Kidney (tissue), 22 donors: ENCODE measurements at regions of chr14 and their contacts with region 1.

Region 1: DNA sequence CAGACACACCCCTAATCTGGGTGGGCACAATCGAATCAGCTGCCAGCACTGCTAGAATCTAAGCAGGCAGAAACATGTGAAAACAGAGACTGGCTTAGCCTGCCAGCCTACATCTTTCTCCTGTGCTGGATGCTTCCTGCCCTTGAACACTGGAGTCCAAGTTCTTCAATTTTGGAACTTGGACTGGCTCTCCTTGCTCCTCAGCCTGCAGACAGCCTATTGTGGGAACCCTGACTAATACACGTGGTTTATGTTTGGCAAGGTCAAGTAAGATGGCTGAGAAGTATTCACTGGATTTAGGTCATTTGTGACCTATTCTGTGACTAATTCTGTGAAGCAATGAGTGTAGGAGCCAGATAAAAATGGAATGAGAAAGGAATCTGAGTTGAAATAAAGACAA is 11.0 kb downstream of the GPR135 start:
- DNase-seq: no peak
- H3K4me3 ChIP-seq: no peak overlapping the region
- H3K27ac ChIP-seq: no peak overlapping the region
- H3K4me1 ChIP-seq: no peaks in the 10 kb centered on the region
- H3K27me3 ChIP-seq: no peaks in the 10 kb centered on the region
- CTCF ChIP-seq: no peak

Region 2: GRCh38 chr14:58944343-58944972 is 509.7 kb before region 1 on chr14:
- intact Hi-C with region 1: no loop called
- DNase-seq: peak in 4 of 5 donors; percentile 57 to 78 (median 61)
- H3K4me3 ChIP-seq: no peak overlapping the region
- H3K27ac ChIP-seq: no peak overlapping the region
- H3K4me1 ChIP-seq: no peaks in the 10 kb centered on the region
- H3K27me3 ChIP-seq: no peaks in the 10 kb centered on the region
- CTCF ChIP-seq: no peak

Region 3: DNA sequence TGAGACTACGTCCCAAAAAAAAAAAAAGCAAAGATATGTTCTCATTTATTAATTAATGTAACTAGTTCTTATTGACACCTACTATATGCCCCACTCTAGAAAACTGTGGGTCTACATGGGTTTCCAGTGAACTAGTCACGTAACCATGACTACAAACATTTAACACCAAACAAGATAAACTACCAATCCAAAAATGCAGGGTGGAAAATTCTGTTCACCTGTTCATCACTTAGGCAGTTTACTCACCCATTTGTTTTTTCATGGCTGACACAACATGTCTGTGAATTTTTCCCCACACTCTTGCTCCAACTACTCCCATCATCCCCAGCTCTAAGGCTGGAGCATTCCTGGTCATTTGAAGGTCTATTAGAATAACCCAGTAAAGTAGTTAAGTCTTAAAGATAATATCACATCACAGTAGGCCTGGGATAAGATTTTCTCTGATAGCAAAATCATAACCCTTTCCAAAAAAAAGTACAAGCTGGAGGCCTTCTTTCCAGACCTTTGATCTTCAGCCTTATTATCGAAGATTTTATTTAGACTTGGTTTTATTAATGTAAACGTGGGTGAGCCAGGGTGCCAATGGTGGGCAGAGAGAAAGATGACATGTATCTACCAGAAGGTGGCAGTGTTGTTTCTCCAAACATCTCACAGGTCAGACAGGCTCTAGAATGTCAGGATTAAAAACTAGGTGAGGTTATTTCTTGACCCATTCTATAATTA is 327.3 kb before region 1 on chr14:
- intact Hi-C with region 1: loop called (anchors 5 kb)
- DNase-seq: peak in 2 of 5 donors; percentile 74 to 85
- H3K4me3 ChIP-seq: no peak overlapping the region
- H3K27ac ChIP-seq: no peak overlapping the region
- H3K4me1 ChIP-seq: no peaks in the 10 kb centered on the region
- H3K27me3 ChIP-seq: no peaks in the 10 kb centered on the region
- CTCF ChIP-seq: peak; percentile 95

Region 4: GRCh38 chr14:59275653-59276052 is 178.5 kb before region 1 on chr14:
- intact Hi-C with region 1: no loop called
- DNase-seq: no peak
- H3K4me3 ChIP-seq: no peak overlapping the region
- H3K27ac ChIP-seq: peak overlapping the region in 1 of 2 donors; percentile 41
- H3K4me1 ChIP-seq: peaks cover 2 to 8% (median 3%) of the 10 kb centered on the region in 3 donors
- H3K27me3 ChIP-seq: no peaks in the 10 kb centered on the region
- CTCF ChIP-seq: no peak

Region 5: DNA sequence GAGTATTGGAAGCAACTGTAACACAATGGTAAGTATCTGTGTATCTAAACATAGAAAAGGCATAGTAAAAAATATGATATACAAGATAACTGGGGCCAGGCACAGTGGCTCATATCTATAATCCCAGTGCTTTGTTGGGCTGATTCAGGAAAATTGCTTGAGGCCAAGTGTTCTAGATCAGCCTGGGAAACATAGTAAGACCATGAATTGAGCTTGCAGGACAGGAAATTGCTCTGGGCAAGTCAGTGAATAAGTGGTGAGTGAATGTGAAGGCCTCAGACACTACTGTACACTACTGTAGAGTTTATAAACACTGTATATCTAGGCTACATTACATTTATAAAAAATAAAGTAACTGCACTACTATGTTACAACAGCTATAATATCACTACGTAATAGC is 64.2 kb before region 1 on chr14:
- intact Hi-C with region 1: no loop called
- DNase-seq: no peak
- H3K4me3 ChIP-seq: no peak overlapping the region
- H3K27ac ChIP-seq: no peak overlapping the region
- H3K4me1 ChIP-seq: no peaks in the 10 kb centered on the region
- H3K27me3 ChIP-seq: no peaks in the 10 kb centered on the region
- CTCF ChIP-seq: no peak